ENCODE measurements at regions of chr18 and their contacts with region 1.

Region 1: GRCh38 chr18:22174341-22175145 is 5.2 kb downstream of the GATA6 start:
- DNase-seq: no peak
- H3K4me3 ChIP-seq: no peak overlapping the region
- CTCF ChIP-seq: no peak

Region 2: DNA sequence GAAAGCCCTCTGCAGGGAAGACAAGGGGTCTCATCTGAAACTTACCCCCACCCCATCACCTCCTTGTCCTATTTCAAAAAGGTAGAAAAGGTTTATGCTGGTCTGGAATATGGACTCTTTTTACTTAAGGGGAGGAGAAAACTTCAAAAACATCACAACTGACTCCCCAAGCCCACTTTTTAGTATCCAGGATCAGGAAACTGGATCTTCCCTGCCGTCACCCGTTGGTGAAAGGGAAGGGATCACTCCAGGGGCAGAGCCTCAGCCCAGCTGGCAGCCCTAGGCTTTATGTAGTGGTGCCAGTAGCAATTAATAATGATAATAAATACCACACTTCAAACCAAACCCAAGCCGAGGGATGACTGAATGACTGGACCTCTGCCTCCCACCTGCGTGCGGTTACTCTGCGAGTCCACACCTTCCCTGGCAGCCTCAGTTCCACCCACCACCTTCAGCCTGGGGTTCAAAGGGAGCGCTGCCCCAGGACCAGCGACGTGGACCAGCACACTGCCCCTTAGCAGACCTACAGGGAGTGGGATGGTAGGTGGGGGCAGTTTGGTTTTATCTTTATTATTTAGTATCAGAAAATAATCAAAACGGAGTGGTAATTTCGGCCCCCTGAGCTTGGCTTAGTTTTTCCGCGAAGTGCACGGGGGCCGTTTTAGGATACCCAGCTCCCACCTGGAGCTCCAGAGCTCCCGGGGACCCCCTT is 10.1 kb before region 1 on chr18:
- CTCF ChIA-PET with region 1: no interaction called
- POLR2A ChIA-PET with region 1: no interaction called
- DNase-seq: no peak
- H3K4me3 ChIP-seq: no peak overlapping the region
- CTCF ChIP-seq: no peak

Region 3: GRCh38 chr18:22563098-22563707 is 388.7 kb after region 1 on chr18:
- CTCF ChIA-PET with region 1: interaction called, 13 read pairs
- POLR2A ChIA-PET with region 1: interaction called, 3 read pairs
- DNase-seq: peak; percentile 70
- H3K4me3 ChIP-seq: no peak overlapping the region
- CTCF ChIP-seq: peak; percentile 68

Measured in AG04449 (cell line).